ENCODE measurements at regions of chr1 and their contacts with region 1.

Region 1: DNA sequence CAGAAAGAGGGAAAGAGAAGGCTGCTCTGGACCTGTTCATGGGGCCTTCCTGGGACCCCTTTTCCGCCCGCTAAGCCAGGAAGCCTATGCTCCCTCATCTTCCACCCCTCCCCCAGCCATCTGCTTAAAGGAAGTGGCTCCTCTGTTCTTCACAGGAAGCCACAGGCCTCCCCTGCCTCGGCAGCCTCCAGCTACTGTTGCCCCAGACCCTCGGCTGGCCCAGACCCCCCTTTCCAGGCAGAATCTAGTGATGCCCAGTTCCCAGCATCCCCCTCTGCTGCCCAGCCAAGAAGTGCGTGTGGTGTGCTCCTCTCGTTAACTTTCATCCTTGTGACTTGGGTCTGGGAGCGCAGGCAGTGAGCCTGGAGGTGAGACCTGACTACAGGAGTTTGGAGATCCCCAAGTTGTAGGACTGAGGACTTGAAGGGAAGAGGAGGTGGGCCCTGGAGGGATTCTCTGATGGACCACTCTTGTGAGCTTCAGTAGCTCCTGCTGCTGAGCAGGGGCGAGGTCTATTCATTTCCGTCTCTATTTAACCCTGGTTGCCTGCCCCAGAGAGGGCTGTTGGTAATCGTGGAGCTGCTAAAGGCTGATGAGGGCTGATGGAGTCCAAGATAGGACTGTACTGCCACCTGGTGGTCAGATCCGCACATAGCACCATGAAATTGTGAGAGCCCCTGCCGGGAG is 9.1 kb downstream of the IFI6 start:
- DNase-seq: peak; percentile 87 to 97
- H3K4me3 ChIP-seq: no peak overlapping the region
- CTCF ChIP-seq: peak in 1 of 3 donors; percentile 94
- POLR2A ChIP-seq: no peak

Region 2: DNA sequence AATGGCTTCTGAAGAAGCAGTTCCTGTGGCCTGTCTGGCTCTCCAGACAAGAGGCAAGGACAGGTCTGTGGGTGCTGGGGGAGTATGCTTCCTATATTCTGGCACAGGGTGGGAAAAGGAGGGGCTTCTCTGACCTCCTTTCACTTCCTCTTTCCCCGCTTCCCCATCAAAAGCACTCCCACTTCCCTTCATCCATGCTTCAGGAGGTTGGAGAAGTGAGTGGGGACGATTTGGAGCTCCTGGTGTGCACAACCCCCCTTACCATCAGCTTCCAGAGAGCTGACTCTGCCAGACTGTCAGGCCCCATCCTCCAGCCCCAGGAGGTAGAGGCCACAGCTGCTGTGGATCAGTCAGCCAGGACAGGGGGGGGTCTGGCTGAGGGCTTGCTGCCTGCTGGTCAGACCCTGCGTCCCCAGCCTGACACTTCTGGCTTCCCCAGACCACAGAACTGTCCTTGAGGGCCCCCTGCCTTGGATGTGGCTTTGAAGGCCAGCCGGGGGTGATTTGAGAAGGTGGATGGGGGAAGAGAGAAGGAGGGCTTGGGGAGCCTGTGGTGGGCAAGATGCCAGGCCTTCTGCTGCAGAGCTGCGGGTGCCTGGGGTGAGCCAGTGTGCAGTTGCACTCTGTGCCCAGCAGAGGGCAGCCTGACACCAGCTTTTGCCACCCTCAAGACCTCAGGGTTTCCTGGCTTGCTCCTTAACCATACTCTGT is 362.4 kb before region 1 on chr1:
- intact Hi-C with region 1: loop called (anchors 10 kb)
- DNase-seq: peak; percentile 78 to 96
- H3K4me3 ChIP-seq: no peak overlapping the region
- CTCF ChIP-seq: peak in 1 of 3 donors; percentile 90
- POLR2A ChIP-seq: no peak

Region 3: DNA sequence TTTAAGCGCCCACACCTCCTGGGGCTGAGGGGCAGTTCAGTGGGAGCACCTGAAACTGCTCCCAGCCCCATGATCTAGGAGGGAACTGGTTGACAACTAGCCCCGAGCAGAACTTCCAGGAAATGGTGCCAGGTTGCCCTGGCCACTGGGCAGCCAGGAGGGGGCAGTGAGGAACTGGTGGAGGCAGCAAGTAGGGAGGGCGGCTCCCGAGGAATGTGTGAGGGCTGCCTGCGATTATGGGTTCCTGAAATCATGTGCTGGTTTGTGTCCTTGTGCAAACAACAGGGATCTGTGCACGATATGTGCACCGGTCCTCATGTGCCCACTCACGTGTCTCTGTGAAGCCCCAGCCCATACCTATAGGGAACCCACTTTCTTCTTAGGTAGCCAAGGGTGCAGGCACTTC is 260.5 kb before region 1 on chr1:
- intact Hi-C with region 1: loop called (anchors 10 kb)
- DNase-seq: peak; percentile 78 to 95
- H3K4me3 ChIP-seq: no peak overlapping the region
- CTCF ChIP-seq: no peak
- POLR2A ChIP-seq: no peak

Region 4: DNA sequence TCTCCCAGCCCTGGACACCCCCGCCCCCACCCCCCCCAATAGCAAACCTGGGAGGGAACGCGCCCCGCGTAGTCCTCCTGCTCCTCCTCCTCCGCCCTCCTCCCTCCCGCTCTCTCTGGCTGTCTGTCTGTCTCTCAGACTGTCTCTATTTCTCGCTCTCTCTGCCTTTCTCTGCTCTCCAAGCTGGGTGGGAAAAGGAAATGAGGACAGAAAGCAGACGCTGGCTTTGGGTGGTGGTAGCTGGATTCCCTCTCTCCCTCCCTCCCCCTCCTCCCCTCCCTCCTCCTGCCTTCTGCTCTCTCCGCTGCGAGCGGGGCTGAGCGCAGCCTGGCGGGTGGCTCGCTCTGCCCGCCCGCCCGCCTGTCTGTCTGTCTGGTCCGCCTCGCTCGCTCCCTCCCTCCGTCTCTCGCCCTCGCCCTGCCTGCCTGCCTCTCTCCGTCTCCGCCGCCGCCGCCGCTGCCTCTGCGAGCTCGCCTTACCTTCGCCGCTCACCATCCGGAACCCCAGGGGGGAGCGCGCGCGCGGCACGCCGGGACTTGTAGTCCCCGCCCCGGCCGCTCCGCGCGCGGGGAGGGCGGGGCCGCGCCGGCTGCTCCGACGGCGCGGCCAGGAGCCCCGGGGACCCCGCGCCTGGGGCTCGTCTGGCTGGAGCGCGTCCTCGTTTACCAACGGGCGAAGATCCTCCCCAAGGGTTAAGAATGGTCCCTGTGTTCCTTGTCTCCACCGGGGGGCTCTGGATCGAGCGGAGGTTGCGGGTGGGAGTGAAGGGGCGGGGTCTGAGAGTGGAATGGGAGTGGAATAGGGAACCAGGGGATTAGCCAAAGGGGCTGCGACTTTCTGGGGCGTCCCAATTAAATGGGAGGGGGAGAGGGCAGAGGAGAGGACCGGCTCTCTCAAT is 58.9 kb before region 1 on chr1 and contains the start of gene AHDC1:
- intact Hi-C with region 1: loop called (anchors 2 kb)
- DNase-seq: peak; percentile 91 to 98
- H3K4me3 ChIP-seq: peak within 1 kb of the TSS; percentile 90
- CTCF ChIP-seq: no peak
- POLR2A ChIP-seq: peak in 1 of 2 donors; percentile 57
- total RNA-seq, gene AHDC1: 37.7 to 63.0 (median 52.5) TPM

Measured in lower leg skin (tissue), 4 donors.